ENCODE measurements at regions of chr12 and their contacts with region 1.

Region 1: DNA sequence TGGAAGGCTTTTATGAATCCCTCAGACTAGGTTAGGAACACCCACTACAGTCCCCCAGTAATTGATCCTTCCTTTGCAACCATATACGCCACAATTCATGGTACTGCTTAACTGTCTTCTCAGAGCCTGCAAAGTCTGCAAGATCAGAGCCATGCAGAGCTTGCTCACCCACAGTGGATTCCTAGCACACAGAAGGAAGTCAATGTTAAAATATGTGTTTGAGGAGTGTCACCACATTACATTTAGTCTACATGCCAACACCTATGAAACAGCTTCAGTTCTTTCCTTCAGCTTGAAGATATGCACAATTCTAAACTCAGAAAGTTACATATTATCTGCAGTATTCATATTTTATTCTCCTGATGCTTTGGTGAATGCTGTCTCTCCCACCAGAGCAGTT is 138.5 kb downstream of the NDUFA12 start:
- DNase-seq: no peak
- H3K4me3 ChIP-seq: no peak overlapping the region
- H3K27ac ChIP-seq: no peak overlapping the region
- H3K4me1 ChIP-seq: no peaks in the 10 kb centered on the region
- H3K27me3 ChIP-seq: no peaks in the 10 kb centered on the region
- CTCF ChIP-seq: no peak

Region 2: DNA sequence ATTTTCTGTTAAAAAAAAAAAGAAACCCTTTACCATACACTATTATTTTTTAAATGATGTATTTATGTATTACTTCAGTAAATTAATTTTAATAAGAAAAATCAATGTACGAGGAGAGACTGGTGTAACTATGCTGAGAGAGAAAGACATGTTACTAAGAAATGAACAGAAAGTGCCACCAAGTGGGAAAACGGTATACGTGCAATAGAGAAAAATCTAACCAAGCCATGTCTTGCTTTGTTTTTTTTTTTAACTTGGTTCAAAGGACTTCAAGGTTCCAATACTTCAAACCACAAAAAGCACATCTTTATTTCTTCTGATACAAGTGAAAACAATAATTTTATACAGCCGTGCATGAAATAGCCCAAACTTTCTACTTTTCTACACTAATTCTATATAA is 115.6 kb after region 1 on chr12:
- CTCF ChIA-PET with region 1: no interaction called
- dilution Hi-C with region 1: no loop called
- in situ Hi-C with region 1: no loop called
- intact Hi-C with region 1: no loop called
- DNase-seq: no peak
- H3K4me3 ChIP-seq: no peak overlapping the region
- H3K27ac ChIP-seq: no peak overlapping the region
- H3K4me1 ChIP-seq: peaks cover 13% of the 10 kb centered on the region
- H3K27me3 ChIP-seq: no peaks in the 10 kb centered on the region
- CTCF ChIP-seq: peak; percentile 1 to 10

Region 3: DNA sequence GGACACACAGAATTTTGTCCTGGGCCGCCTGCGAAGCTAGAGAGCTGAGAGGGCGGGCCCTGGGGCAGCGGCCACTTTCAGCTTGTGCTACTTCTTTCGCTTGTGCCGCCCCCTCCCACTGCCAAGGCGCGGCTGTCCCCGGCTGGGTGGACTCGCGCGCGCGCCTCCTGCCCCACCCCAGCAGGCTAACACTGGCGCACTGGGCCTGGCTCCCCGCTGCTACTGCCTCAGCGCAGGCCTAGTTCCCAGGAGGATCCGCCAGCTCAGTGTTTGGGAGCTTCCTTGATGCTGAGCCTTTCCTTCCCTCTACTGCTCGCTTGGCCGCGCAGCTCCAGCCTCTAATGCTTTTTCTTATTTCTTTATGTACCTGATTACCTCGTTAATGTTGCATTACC is 581.5 kb after region 1 on chr12:
- CTCF ChIA-PET with region 1: interaction called, 10 read pairs
- dilution Hi-C with region 1: no loop called
- in situ Hi-C with region 1: no loop called
- intact Hi-C with region 1: no loop called
- DNase-seq: no peak
- H3K4me3 ChIP-seq: no peak overlapping the region
- H3K27ac ChIP-seq: no peak overlapping the region
- H3K4me1 ChIP-seq: no peaks in the 10 kb centered on the region
- H3K27me3 ChIP-seq: peaks cover 3% of the 10 kb centered on the region
- CTCF ChIP-seq: no peak

Measured in mammary epithelial cell (primary cell).